CD4-positive, alpha-beta memory T cell (primary cell): ENCODE measurements at regions of chr17 and their contacts with region 1.

Region 1: DNA sequence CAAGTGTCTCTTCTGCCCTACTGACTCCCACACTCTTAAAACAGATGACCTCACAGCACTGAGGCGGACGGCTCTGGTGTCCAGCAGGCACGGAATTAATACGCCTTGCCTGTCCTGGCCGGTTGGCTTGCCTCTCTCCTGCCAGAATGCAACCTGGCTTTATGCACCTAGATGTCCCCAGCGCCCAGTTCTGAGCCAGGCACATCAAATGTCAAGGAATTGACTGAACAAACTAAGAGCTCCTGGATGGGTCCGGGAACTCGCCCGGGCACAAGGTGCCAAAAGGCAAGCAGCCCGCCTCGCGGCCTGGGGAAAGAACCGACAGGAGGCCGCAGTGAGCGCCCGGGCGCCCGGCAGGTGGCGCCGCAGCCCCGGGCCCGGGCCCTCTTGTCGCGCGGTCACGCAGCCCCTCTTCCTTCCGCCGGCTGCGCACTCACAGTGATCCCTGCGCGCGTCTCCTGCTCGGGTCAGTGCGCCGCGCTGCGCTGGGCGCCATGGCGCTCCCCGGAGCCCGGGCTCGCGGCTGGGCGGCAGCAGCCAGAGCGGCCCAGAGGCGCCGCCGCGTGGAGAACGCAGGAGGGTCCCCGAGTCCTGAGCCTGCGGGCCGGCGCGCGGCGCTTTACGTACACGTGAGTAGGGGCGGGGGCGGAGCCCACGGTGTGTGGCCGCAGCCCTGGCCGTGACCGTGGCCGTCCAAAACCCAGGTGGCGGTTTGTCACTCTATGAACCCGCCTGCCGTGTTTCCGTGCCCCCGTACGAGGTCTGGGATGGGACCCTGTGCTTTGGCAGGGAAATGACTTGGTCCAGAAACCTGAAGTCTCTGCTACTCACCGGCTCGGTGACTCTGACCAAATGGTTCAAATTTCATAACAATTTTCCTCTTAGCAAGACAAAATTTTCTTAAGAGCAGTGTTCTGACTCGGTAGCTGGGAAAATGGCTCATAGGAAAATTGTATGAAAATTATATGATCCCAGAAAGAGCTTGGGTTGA is at the start of gene RSAD1:
- DNase-seq: peak; percentile 81 to 84 (median 83)
- H3K4me3 ChIP-seq: peak within 1 kb of the TSS; percentile 78 to 84
- H3K4me3 Mint-ChIP-seq: peak within 1 kb of the TSS; percentile 85 to 92 (median 90)
- H3K27ac ChIP-seq: peak within 1 kb of the TSS; percentile 74
- H3K27ac Mint-ChIP-seq: peak within 1 kb of the TSS; percentile 89 to 92 (median 89)
- H3K4me1 ChIP-seq: peaks cover 19% of the 10 kb centered on the region
- H3K4me1 Mint-ChIP-seq: peaks cover 15 to 30% (median 22%) of the 10 kb centered on the region in 4 donors
- H3K27me3 ChIP-seq: no peaks in the 10 kb centered on the region
- H3K27me3 Mint-ChIP-seq: peaks cover 3 to 4% of the 10 kb centered on the region in 2 donors
- total RNA-seq, gene RSAD1: 81.1 to 86.0 TPM

Region 2: DNA sequence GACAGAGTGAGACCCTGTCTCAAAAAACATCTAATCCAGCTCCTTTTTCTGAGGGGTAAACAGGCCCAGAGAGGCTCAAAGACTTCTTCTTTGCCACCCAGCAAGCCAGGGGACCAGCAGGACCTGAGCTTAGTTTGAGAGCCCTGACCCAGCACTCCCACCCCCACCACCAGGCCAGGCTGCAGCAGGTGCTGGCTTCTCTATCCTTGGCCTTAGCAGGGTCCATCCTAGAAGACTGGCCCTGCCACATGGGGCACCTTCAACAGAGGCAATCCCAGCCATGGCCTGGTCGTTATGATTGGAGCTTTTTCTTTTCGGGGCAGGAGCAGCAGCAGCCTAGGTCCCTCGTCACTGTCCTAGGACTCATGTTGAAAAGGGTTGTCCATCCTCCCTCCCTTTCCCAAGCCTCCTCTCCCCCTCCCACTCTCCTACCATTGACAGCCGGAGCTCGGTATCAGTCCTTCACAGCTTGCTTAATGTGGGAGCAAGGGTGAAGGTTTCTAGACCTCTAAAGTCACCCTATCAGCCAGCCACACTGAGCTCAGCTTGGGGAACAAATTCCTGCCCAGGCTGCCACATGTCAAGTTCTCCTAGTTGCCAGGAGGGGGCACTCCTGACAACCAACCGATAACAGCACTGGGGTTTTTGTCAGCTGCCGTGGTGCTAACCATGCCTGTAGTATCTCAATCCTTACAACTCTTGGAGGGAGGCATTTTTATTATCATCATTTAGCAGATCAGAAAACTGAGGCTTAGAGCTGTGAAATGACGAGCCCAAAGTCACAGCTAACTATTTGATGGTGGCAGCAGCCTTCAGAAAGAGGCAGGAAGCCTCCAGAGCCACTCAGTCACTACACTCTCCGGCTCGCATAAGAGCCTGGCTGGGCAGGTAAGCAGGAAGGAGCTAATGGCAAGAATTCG is 116.9 kb before region 1 on chr17:
- CTCF ChIA-PET with region 1: interaction called, 23 read pairs
- POLR2A ChIA-PET with region 1: interaction called, 6 read pairs
- intact Hi-C with region 1: loop called (anchors 2 kb)
- DNase-seq: peak; percentile 55 to 69 (median 62)
- H3K4me3 ChIP-seq: no peak overlapping the region
- H3K4me3 Mint-ChIP-seq: peak overlapping the region in 7 of 8 donors; percentile 2 to 77 (median 57)
- H3K27ac ChIP-seq: peak overlapping the region; percentile 9
- H3K27ac Mint-ChIP-seq: peak overlapping the region; percentile 73 to 91 (median 87)
- H3K4me1 ChIP-seq: peaks cover 7% of the 10 kb centered on the region
- H3K4me1 Mint-ChIP-seq: peaks cover 8 to 10% (median 9%) of the 10 kb centered on the region in 4 donors
- H3K27me3 ChIP-seq: no peaks in the 10 kb centered on the region
- H3K27me3 Mint-ChIP-seq: no peaks in the 10 kb centered on the region

Region 3: DNA sequence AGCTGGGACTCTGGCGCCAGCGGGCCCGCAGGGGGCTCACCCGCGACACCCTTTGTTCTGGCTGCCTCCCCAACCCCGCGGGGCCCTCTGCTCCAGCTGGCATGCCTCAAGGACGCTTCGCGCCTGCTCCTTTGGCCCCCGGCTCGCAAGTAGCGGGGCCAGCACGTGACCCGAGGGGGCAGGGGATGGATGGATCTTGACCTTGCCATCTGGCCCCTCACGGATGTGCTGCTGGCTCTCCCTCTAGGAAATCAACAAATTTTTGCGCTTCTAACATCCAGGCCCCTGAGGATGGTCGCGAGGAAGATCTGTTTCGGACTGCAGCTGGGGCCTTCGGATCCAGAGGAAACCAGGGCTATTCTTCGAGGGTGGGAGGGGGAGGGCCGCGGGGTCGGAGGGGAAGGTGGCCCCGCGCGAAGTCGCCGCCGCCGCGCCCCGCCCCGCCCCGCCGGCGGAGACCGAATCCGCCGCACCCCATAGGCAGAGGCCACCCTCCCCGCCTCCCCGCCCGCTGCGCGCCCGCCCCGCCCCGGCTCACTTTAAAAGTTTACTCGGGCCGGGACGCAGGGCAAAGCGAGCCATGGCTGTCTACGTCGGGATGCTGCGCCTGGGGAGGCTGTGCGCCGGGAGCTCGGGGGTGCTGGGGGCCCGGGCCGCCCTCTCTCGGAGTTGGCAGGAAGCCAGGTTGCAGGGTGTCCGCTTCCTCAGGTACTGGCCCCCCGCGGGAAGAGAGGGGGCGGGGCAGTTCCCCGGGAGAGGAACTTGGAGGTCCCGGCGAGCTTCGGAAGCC is 52.8 kb before region 1 on chr17 and contains the start of gene ACSF2:
- CTCF ChIA-PET with region 1: interaction called, 6 read pairs
- POLR2A ChIA-PET with region 1: interaction called, 5 read pairs
- intact Hi-C with region 1: loop called (anchors 2 kb)
- DNase-seq: peak; percentile 51 to 74 (median 63)
- H3K4me3 ChIP-seq: peak within 1 kb of the TSS; percentile 17 to 69
- H3K4me3 Mint-ChIP-seq: peak within 1 kb of the TSS; percentile 77 to 93 (median 88)
- H3K27ac ChIP-seq: peak within 1 kb of the TSS; percentile 62
- H3K27ac Mint-ChIP-seq: peak within 1 kb of the TSS; percentile 72 to 93 (median 89)
- H3K4me1 ChIP-seq: peaks cover 32% of the 10 kb centered on the region
- H3K4me1 Mint-ChIP-seq: peaks cover 19 to 45% (median 32%) of the 10 kb centered on the region in 4 donors
- H3K27me3 ChIP-seq: no peaks in the 10 kb centered on the region
- H3K27me3 Mint-ChIP-seq: no peaks in the 10 kb centered on the region
- total RNA-seq, gene ACSF2: 20.8 to 24.8 TPM

Region 4: DNA sequence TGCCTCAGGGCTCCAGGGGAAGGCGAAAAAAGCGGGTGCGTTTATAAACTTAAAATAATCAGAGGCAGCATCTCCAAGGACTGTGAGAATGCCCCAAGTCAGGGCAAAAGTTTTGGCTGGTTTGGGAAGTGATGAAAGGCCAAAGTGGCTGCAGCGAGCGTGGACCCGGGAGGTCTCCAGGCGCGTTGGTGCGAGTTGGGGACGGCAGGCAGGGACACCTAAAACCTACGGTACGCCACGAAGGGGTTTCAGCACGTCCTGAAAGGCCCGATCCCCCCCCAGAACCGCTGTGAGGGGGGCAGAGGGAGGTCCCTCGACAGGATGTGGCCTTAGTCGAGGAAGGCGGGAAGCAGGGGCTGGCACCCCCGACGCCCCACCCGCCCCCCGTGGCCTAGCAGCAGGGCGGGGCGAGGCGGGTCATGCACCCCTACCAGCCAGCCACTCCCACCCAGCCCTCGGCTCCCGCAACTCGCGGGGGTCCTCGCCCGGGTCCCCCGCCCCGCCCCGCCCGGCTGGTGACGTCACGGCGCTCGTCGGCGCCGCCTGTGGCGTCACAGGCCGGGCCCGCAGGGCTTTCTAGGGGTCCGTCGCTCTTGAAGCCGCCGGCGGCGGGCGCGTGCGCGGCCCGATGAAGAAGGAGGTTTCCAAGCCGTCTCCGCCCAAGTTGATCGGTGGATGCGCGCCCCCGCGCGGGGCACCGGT is 29.3 kb after region 1 on chr17 and contains the start of gene MYCBPAP:
- CTCF ChIA-PET with region 1: interaction called, 32 read pairs
- POLR2A ChIA-PET with region 1: interaction called, 4 read pairs
- intact Hi-C with region 1: loop called (anchors 1 kb)
- DNase-seq: peak; percentile 74 to 89 (median 76)
- H3K4me3 ChIP-seq: peak within 1 kb of the TSS; percentile 19 to 63
- H3K4me3 Mint-ChIP-seq: peak within 1 kb of the TSS; percentile 87 to 98 (median 90)
- H3K27ac ChIP-seq: peak within 1 kb of the TSS; percentile 72
- H3K27ac Mint-ChIP-seq: peak within 1 kb of the TSS; percentile 90 to 97 (median 92)
- H3K4me1 ChIP-seq: peaks cover 31% of the 10 kb centered on the region
- H3K4me1 Mint-ChIP-seq: peaks cover 19 to 53% (median 34%) of the 10 kb centered on the region in 4 donors
- H3K27me3 ChIP-seq: no peaks in the 10 kb centered on the region
- H3K27me3 Mint-ChIP-seq: no peaks in the 10 kb centered on the region
- total RNA-seq, gene MYCBPAP: 5.3 to 6.8 TPM

Region 5: GRCh38 chr17:50560185-50560824 is 81.6 kb after region 1 on chr17 and contains the start of gene CACNA1G:
- CTCF ChIA-PET with region 1: no interaction called
- POLR2A ChIA-PET with region 1: no interaction called
- intact Hi-C with region 1: no loop called
- DNase-seq: peak; percentile 80 to 87 (median 84)
- H3K4me3 ChIP-seq: peak within 1 kb of the TSS; percentile 29 to 62
- H3K4me3 Mint-ChIP-seq: peak within 1 kb of the TSS; percentile 74 to 87 (median 80)
- H3K27ac ChIP-seq: no peak within 1 kb of the TSS
- H3K27ac Mint-ChIP-seq: peak within 1 kb of the TSS in 2 of 7 donors; percentile 22 to 72
- H3K4me1 ChIP-seq: peaks cover 34% of the 10 kb centered on the region
- H3K4me1 Mint-ChIP-seq: peaks cover 10 to 42% (median 22%) of the 10 kb centered on the region in 4 donors
- H3K27me3 ChIP-seq: peaks cover 23% of the 10 kb centered on the region
- H3K27me3 Mint-ChIP-seq: peaks cover 25 to 35% of the 10 kb centered on the region in 2 donors
- total RNA-seq, gene CACNA1G: not detected

Region 6: DNA sequence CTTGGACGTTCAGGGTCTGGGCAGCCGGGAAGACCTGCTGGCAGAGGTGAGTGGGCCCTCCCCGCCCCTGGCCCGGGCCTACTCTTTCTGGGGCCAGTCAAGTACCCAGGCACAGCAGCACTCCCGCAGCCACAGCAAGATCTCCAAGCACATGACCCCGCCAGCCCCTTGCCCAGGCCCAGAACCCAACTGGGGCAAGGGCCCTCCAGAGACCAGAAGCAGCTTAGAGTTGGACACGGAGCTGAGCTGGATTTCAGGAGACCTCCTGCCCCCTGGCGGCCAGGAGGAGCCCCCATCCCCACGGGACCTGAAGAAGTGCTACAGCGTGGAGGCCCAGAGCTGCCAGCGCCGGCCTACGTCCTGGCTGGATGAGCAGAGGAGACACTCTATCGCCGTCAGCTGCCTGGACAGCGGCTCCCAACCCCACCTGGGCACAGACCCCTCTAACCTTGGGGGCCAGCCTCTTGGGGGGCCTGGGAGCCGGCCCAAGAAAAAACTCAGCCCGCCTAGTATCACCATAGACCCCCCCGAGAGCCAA is 147.4 kb after region 1 on chr17:
- CTCF ChIA-PET with region 1: interaction called, 7 read pairs
- POLR2A ChIA-PET with region 1: no interaction called
- intact Hi-C with region 1: loop called (anchors 1 kb)
- DNase-seq: peak; percentile 49 to 61 (median 53)
- H3K4me3 ChIP-seq: no peak overlapping the region
- H3K4me3 Mint-ChIP-seq: no peak overlapping the region
- H3K27ac ChIP-seq: no peak overlapping the region
- H3K27ac Mint-ChIP-seq: no peak overlapping the region
- H3K4me1 ChIP-seq: peaks cover 4% of the 10 kb centered on the region
- H3K4me1 Mint-ChIP-seq: peaks cover 0 to 4% (median under 1%) of the 10 kb centered on the region in 4 donors
- H3K27me3 ChIP-seq: peaks cover 14% of the 10 kb centered on the region
- H3K27me3 Mint-ChIP-seq: peaks cover 21 to 38% of the 10 kb centered on the region in 2 donors

Region 7: DNA sequence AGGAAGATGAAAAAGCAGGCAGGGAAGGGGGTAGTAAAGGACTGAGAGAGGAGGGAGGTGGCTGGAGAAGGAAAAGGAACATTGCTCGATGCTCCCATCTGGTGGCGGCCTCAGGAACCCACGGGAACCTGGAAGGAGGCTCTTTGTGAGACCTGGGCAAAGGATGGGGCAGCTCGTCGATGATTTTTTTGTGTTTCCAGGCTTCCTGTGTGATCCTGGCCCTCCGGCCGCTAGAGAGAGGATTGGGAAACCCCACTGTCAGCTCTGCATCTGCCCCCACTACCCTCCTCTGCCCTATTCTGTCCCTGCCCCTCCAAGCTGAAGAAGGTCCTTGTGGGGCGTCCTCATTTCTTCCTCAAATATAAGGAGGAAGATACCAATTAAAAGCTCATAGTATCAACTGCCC is 363.3 kb after region 1 on chr17:
- CTCF ChIA-PET with region 1: interaction called, 4 read pairs
- POLR2A ChIA-PET with region 1: no interaction called
- intact Hi-C with region 1: loop called (anchors 2 kb)
- DNase-seq: peak in 4 of 5 donors; percentile 42 to 46 (median 44)
- H3K4me3 ChIP-seq: no peak overlapping the region
- H3K4me3 Mint-ChIP-seq: no peak overlapping the region
- H3K27ac ChIP-seq: no peak overlapping the region
- H3K27ac Mint-ChIP-seq: peak overlapping the region in 2 of 7 donors; percentile 32 to 48
- H3K4me1 ChIP-seq: no peaks in the 10 kb centered on the region
- H3K4me1 Mint-ChIP-seq: peaks cover 0 to 5% (median 3%) of the 10 kb centered on the region in 4 donors
- H3K27me3 ChIP-seq: no peaks in the 10 kb centered on the region
- H3K27me3 Mint-ChIP-seq: peaks cover 2% of the 10 kb centered on the region in 2 donors